Head of caudate nucleus (tissue), 42 donors: ENCODE measurements at regions of chr10 and their contacts with region 1.

Region 1: DNA sequence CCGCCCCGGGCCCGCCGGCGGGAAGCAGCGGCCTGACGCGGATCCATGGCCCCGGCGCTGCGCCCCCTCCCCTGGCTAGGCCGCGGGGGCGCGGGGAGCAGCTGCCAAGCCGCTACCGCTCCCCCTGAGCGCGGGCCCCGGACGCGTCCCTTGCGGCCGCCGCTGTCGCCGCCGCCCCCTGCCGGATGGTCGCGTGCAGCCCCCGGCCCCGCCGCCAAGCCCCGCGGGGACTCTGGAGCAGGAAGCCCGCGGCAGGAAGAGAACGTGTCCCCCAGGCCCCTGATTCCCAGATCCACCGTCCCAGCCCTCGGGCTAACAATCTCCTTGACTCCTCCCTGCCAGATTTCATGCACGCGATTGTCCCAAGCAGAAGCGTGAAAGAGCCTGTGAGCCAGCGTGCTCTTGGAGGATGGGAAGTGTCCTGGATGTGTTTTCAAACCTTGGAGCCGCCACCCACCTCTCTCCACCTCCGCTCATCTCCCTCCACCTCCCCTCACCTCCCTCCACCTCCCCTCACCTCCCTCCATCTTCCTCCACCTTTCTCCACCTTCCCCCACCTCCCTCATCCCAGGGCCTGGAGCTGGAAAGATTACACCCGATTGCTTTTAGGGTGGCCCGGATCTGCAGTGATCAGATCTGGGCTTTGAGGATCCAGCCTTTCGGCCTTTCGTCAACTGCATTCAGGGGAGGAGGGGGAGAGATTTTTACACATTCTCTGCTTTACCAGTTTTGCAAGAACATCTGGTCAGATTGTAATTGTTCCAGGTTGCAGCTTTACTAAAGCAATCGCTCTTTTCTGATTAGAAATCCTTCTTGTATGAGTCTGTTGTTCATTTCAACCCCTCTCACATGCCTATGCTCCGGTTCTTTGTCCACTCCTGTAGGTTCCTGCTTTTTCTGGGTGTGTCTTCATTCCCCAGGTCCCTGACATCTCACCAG is 570 bp upstream of the PRTFDC1 start:
- DNase-seq: peak in 39 of 42 donors; percentile 21 to 85 (median 66)

Region 2: DNA sequence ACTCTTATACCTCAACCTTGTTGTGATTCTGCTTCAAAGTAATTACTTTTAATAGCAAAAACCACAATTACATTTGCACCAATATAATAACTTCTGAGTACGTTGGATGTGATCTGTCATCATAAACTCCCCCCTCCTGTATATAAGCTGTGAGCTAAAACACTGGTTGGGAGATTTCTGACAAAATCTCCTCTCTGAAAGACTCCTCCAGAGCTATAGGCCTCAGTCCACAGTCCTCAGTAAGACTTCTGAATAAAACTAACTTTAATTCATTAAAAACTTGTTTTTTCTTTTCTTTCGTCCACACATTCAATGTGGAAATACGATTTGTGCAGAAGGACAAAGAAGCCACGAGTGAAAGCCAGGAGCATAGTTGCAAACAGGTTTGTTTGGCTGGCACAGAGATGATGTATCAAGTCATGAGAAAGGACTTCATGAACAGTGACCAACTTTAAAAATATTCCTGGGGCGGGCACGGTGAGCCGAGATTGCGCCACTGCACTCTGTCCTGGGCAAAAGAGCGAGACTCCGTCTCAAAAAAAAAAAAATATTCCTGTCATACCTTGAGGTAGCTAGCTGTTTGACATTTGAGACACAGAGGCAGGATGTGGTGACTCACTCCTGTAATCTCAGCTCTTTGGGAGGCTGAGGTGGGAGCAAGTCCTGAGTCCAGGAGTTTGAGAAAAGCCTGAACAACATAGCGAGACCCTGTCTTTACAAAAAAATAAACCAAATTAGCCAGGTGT is 138.2 kb before region 1 on chr10:
- intact Hi-C with region 1: loop called (anchors 10 kb)
- DNase-seq: peak in 1 of 42 donors; percentile 38

Region 3: GRCh38 chr10:24901686-24902399 is 51.1 kb before region 1 on chr10:
- intact Hi-C with region 1: no loop called
- DNase-seq: peak in 38 of 42 donors; percentile 20 to 87 (median 58)

Region 4: DNA sequence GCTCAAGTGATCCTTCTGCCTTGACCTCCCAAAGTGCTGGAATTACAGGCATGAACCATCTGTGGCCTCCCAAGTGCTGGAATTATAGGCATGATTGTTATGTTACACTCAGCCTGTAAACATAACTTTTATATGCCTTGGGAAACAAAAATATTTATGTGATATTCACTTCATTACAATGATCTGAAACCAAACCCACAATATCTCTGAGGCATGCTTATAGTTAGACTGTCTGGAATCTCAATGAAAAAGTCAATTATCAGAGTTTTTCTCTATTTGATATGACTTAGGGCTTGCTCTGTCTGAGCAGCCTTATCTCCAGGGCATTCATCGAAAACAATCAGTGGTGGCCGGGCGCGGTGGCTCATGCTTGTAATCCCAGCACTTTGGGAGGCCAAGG is 785.8 kb after region 1 on chr10:
- intact Hi-C with region 1: no loop called
- DNase-seq: no peak